Posterior vena cava (tissue), 2 donors: ENCODE measurements at regions of chr3 and their contacts with region 1.

Region 1: GRCh38 chr3:23999012-23999641 is 54.0 kb downstream of the NR1D2 start:
- DNase-seq: peak; percentile 92

Region 2: DNA sequence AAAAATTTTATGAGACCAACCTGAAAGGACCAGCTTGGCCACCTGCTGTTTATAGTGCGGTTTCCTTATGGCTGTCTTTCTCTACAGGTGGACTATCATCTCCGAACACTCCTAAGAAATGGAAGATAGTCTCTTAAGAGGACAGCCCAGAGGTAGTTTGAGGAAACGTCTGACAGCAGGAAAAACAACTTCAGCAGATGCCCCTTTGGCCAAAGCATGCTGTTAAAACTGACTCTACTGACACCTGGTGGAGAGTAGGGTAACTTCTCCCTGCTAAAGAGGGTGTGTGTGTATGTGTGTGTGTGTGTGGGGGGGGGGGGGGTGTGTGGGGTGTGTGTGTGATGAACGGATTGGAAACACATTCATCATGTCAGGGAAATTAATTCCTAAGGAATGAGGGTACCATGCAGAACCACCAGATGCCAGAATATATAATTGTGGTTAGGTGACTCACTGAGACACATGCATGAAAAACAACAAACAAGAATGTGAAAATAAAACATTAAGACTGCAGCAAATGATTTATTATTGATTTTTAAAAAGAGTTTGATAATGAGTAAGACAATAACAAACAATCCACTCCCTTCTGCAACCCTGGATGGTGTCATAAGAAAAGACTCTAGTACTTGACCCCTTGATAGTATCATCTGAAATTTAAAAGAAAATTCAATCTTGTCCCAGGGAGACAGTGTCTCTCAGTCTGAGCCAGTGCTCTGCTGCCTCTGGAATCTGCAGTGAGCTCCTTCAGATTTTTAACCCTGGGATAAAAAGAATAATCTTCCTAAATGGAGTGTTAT is 239.0 kb after region 1 on chr3:
- intact Hi-C with region 1: loop called (anchors 5 kb)
- DNase-seq: no peak

Region 3: GRCh38 chr3:24299806-24300626 is 300.9 kb after region 1 on chr3:
- intact Hi-C with region 1: no loop called
- DNase-seq: no peak

Region 4: GRCh38 chr3:24494618-24495325 is 495.6 kb after region 1 on chr3 and contains the start of gene THRB:
- intact Hi-C with region 1: loop called in 1 of 2 experiments (anchors 10 kb)
- DNase-seq: peak; percentile 93
- total RNA-seq, gene THRB: 25.0 to 32.5 TPM

Region 5: DNA sequence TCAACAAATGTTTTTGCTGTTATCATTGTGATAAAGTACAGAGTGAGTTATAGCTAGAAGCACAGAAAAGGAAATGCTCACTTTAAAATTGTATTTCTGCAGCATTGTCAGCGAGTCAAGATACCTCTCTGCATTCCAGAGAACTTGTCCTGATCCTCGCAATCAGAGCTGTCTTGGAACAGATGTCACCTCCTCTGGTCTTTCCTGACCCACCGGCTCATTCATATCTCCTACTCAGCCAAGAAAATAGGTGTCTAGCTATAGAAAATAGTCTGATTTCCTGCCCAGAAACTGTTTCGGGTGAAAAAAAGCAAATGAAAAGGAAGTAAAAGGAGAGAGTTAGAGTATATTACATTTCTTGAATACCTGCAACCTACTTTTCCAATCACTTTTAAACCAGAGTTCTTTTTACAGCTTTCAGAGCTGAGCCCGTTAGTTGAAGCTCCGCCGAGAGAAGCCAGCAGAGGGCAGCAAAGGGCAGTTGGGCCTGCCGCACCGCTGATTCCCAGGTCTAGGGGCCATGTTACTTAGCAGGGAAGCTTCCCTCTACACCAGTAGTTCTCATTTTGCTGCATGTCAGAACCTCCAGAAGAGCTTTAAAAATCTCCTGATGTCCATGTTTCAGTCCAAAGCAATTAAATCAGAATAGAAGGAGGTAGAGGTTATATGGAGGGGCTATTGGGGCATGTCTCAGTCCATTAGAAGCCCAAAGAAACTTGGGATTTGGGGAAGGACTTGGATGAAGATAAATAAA is 681.3 kb after region 1 on chr3:
- intact Hi-C with region 1: loop called in 1 of 2 experiments (anchors 5 kb)
- DNase-seq: peak; percentile 85